B cell (primary cell): ENCODE measurements at regions of chr3 and their contacts with region 1.

Region 1: DNA sequence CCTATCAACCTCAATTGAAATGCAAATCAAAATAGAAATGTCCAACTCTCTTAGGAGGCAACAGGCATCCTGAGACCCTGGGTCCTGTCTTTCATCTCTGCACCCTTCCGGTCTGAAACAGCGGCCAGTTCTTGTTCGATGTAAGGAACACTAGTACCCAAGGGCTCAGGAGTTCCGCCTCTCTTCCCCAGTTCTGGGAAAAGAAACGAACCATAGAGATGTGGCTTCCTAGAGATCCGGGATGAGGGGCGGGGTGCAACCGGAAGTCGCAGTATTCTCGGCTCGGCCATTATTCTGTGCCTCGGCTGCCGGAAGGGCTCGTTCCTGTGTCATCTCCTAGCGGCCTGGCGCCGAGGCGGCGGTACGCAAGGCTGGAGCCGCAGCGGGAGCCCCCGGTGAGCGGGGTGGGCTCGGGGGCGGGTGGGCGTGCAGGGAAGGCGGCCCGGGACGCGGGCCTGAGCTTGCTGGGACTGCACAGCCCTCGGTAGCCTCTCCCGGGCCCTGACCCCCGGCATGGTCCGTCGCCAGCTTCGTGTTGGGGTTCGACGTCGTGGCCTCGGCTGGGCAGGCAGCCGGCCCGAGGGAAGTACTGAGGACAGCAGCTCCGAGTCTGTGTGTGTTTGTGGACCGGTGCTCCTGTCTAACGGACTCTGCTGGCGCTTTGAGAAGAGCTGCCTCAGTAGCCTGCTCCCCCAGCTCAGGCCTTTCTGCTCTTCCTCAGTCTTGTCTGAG is at the start of gene ZNF197:
- DNase-seq: peak; percentile 64
- ATAC-seq: peak; percentile 88
- H3K4me3 ChIP-seq: peak within 1 kb of the TSS; percentile 70 to 93 (median 80)
- H3K4me3 Mint-ChIP-seq: peak within 1 kb of the TSS; percentile 92
- H3K27ac ChIP-seq: peak within 1 kb of the TSS; percentile 51 to 73
- H3K27ac Mint-ChIP-seq: peak within 1 kb of the TSS; percentile 80
- H3K4me1 ChIP-seq: peaks cover 13 to 16% of the 10 kb centered on the region in 2 donors
- H3K4me1 Mint-ChIP-seq: peaks cover 27% of the 10 kb centered on the region
- H3K27me3 ChIP-seq: no peaks in the 10 kb centered on the region
- H3K27me3 Mint-ChIP-seq: no peaks in the 10 kb centered on the region
- CTCF ChIP-seq: no peak
- total RNA-seq, gene ZNF197: 16.9 and 17.7 TPM in 2 replicates

Region 2: GRCh38 chr3:44584646-44585501 is 40.0 kb before region 1 on chr3 and contains the start of gene ZNF660:
- CTCF ChIA-PET with region 1: no interaction called
- POLR2A ChIA-PET with region 1: no interaction called
- intact Hi-C with region 1: loop called (anchors 5 kb)
- DNase-seq: peak; percentile 42
- ATAC-seq: peak; percentile 86
- H3K4me3 ChIP-seq: peak within 1 kb of the TSS; percentile 47 to 66 (median 62)
- H3K4me3 Mint-ChIP-seq: peak within 1 kb of the TSS; percentile 88
- H3K27ac ChIP-seq: peak within 1 kb of the TSS in 1 of 2 donors; percentile 67
- H3K27ac Mint-ChIP-seq: no peak within 1 kb of the TSS
- H3K4me1 ChIP-seq: peaks cover 16 to 19% of the 10 kb centered on the region in 2 donors
- H3K4me1 Mint-ChIP-seq: peaks cover 19% of the 10 kb centered on the region
- H3K27me3 ChIP-seq: no peaks in the 10 kb centered on the region
- H3K27me3 Mint-ChIP-seq: peaks cover 20% of the 10 kb centered on the region
- CTCF ChIP-seq: no peak
- total RNA-seq, gene ZNF660: 7.5 and 8.7 TPM in 2 replicates

Region 3: DNA sequence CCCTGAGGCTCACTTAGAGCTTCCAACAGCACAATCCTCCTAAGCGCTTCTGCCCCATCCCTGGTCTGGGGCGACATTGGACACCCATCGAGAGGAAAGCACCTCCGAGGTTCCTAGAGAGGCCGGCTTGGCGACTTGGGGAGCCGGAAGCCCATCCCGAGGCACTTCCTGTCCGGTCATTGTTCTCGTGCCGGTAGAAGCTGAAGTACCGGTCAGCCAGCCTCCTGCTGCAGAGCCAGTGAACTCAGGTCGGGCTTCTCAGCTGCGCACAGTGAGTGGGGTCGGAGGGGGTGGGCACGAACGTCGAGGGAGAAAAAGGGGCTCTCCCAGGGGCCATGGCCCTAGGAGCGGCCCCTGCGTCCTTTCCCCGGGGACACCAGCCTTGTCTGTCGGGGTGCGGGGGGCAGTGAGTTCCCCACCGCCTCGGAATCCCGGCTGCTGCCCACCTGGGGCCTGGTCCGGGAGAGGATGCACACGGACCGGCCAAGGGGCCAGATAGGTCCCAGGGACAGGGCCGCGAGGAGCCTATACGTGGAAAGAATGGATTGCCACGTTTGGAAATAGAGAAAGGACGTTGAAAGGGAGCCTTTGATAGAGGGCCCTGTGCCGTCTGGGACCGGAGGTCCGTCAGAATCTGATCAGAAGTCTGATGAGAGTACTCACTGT is 23.8 kb after region 1 on chr3 and contains the start of gene ZNF35:
- CTCF ChIA-PET with region 1: interaction called, 3 read pairs
- POLR2A ChIA-PET with region 1: interaction called, 6 read pairs
- intact Hi-C with region 1: loop called (anchors 1 kb)
- DNase-seq: peak; percentile 67
- ATAC-seq: peak; percentile 84
- H3K4me3 ChIP-seq: peak within 1 kb of the TSS; percentile 43 to 95 (median 86)
- H3K4me3 Mint-ChIP-seq: peak within 1 kb of the TSS; percentile 96
- H3K27ac ChIP-seq: peak within 1 kb of the TSS; percentile 27 to 74
- H3K27ac Mint-ChIP-seq: peak within 1 kb of the TSS; percentile 80
- H3K4me1 ChIP-seq: peaks cover 8 to 15% of the 10 kb centered on the region in 2 donors
- H3K4me1 Mint-ChIP-seq: peaks cover 23% of the 10 kb centered on the region
- H3K27me3 ChIP-seq: no peaks in the 10 kb centered on the region
- H3K27me3 Mint-ChIP-seq: no peaks in the 10 kb centered on the region
- CTCF ChIP-seq: no peak
- total RNA-seq, gene ZNF35: 12.1 and 16.6 TPM in 2 replicates

Region 4: DNA sequence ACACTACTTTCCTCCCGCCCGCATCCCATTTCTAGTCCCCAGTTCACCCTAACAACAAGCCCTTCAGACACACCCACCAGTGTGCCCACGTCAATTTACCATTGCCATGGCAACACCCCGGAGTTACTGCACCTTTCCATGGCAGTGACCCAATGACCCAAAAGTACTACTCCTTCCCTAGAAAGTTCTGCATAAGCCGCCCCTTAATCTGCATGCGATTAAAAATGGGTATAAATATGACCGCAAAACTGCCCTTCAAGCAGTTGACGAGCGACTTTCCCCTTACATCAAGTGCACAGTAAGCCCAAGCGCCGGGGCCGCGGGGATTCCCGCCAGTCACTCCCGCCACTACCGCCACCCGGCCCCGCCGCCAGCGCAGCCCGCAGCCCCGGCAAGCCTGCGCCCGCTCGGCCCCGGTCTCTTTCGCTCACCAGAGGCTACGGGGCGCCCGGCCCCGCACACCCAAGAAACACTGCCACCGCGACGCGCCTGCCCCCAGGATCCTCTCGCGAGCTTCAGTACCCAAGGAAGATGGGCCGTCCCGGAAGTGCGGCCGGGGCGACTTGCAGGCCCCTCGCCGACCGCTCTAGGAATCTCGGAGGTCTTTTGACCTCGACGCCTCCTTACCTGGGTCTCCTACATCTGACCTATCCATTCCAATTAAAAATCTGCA is 60.3 kb after region 1 on chr3:
- CTCF ChIA-PET with region 1: no interaction called
- POLR2A ChIA-PET with region 1: no interaction called
- intact Hi-C with region 1: loop called (anchors 1 kb)
- DNase-seq: peak; percentile 85
- ATAC-seq: peak; percentile 86
- H3K4me3 ChIP-seq: peak overlapping the region; percentile 46 to 72 (median 70)
- H3K4me3 Mint-ChIP-seq: peak overlapping the region; percentile 91
- H3K27ac ChIP-seq: peak overlapping the region in 1 of 2 donors; percentile 78
- H3K27ac Mint-ChIP-seq: peak overlapping the region; percentile 69
- H3K4me1 ChIP-seq: peaks cover 11% of the 10 kb centered on the region in 2 donors
- H3K4me1 Mint-ChIP-seq: peaks cover 21% of the 10 kb centered on the region
- H3K27me3 ChIP-seq: peaks cover 0 to 17% (median 8%) of the 10 kb centered on the region in 4 experiments
- H3K27me3 Mint-ChIP-seq: peaks cover 20% of the 10 kb centered on the region
- CTCF ChIP-seq: no peak